ENCODE measurements at regions of chr1 and their contacts with region 1.

Region 1: GRCh38 chr1:86470859-86471258 is 2.1 kb downstream of the CLCA1 start:
- DNase-seq: no peak
- H3K4me3 Mint-ChIP-seq: no peak overlapping the region
- H3K27ac Mint-ChIP-seq: no peak overlapping the region
- H3K4me1 Mint-ChIP-seq: no peaks in the 10 kb centered on the region
- H3K27me3 Mint-ChIP-seq: peaks cover 1% of the 10 kb centered on the region

Region 2: GRCh38 chr1:86227026-86227425 is 243.8 kb before region 1 on chr1:
- CTCF ChIA-PET with region 1: no interaction called
- intact Hi-C with region 1: no loop called
- DNase-seq: no peak
- H3K4me3 Mint-ChIP-seq: no peak overlapping the region
- H3K27ac Mint-ChIP-seq: no peak overlapping the region
- H3K4me1 Mint-ChIP-seq: no peaks in the 10 kb centered on the region
- H3K27me3 Mint-ChIP-seq: no peaks in the 10 kb centered on the region

Region 3: DNA sequence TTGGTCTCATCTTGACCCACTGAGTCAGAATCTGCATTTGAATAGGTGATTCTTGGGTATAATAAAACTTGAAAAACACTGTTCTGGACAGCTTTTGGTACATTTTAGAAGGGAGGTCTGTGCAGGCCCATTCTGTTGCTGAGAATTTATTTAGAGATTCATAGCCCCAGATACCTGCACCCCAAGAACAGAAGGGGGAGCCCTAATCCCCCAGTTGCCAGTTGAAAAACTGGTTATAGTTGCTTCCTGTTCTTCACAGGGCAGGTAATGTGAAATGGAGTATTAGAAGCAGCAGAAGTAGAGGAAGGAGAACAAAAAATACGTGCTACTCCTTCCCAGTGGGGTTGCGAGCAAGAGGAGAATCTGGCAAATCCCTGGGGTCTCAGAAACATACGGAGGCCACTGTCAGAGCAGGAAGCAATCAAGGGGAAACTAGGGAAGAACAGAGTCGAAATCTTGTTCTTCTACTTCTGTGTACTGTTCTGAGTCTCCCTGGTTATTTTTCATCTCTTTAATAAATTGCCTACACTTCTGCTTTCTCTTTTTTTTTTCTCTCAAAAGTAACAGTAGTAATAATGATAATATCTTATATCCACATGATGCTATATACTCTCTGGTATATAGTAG is 51.5 kb before region 1 on chr1:
- CTCF ChIA-PET with region 1: interaction called, 6 read pairs
- intact Hi-C with region 1: loop called (anchors 1 kb)
- DNase-seq: peak; percentile 71
- H3K4me3 Mint-ChIP-seq: peak overlapping the region; percentile 60
- H3K27ac Mint-ChIP-seq: no peak overlapping the region
- H3K4me1 Mint-ChIP-seq: peaks cover 4% of the 10 kb centered on the region
- H3K27me3 Mint-ChIP-seq: peaks cover 3% of the 10 kb centered on the region

Region 4: DNA sequence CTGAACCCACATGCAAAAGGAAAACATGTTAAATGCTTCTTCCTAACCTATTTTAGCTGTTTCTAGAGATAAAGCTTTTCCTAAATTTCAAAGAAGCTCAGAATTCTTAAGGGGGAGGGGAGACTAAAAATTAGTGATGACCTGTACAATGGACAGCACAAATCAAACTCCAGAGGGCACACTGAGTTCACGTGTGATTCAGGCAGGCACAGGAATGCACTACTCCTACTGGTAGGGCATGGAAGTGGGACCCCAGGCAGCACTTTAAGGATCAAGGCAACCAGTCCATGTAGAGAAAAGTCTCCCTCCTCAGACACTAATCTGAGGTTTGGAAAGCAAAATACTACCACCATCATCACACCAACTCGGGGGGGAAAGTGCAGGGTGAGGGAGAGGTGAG is 44.7 kb after region 1 on chr1:
- CTCF ChIA-PET with region 1: no interaction called
- intact Hi-C with region 1: no loop called
- DNase-seq: peak; percentile 14
- H3K4me3 Mint-ChIP-seq: no peak overlapping the region
- H3K27ac Mint-ChIP-seq: no peak overlapping the region
- H3K4me1 Mint-ChIP-seq: no peaks in the 10 kb centered on the region
- H3K27me3 Mint-ChIP-seq: no peaks in the 10 kb centered on the region

Region 5: DNA sequence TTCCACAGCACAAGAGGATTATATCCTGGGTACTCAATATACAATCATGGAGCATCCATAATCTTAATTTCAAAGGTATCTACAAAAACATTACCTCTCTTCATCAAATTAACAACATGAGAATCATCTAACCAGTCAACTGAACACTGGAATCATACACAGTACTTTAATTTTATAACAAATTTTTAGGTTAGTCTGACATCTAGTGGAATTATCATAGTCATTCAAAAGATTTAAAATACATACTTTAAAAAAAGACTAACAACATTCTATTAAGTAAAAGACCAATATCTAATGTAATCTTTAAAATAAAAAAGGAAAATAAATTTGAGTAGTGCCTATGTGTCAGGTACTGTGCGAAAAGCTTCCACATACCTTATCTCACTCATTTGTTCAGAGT is 216.7 kb after region 1 on chr1:
- CTCF ChIA-PET with region 1: no interaction called
- intact Hi-C with region 1: loop called (anchors 10 kb)
- DNase-seq: no peak
- H3K4me3 Mint-ChIP-seq: no peak overlapping the region
- H3K27ac Mint-ChIP-seq: no peak overlapping the region
- H3K4me1 Mint-ChIP-seq: no peaks in the 10 kb centered on the region
- H3K27me3 Mint-ChIP-seq: no peaks in the 10 kb centered on the region

Region 6: GRCh38 chr1:87584586-87584985 is 1113.7 kb after region 1 on chr1:
- CTCF ChIA-PET with region 1: no interaction called
- intact Hi-C with region 1: no loop called
- DNase-seq: no peak
- H3K4me3 Mint-ChIP-seq: no peak overlapping the region
- H3K27ac Mint-ChIP-seq: no peak overlapping the region
- H3K4me1 Mint-ChIP-seq: no peaks in the 10 kb centered on the region
- H3K27me3 Mint-ChIP-seq: no peaks in the 10 kb centered on the region

Measured in activated naive CD4-positive, alpha-beta T cell treated with anti-CD3 and anti-CD28 coated beads for 36 hours (primary cell).